Right lobe of liver (tissue), 6 donors: ENCODE measurements at regions of chr9 and their contacts with region 1.

Region 1: DNA sequence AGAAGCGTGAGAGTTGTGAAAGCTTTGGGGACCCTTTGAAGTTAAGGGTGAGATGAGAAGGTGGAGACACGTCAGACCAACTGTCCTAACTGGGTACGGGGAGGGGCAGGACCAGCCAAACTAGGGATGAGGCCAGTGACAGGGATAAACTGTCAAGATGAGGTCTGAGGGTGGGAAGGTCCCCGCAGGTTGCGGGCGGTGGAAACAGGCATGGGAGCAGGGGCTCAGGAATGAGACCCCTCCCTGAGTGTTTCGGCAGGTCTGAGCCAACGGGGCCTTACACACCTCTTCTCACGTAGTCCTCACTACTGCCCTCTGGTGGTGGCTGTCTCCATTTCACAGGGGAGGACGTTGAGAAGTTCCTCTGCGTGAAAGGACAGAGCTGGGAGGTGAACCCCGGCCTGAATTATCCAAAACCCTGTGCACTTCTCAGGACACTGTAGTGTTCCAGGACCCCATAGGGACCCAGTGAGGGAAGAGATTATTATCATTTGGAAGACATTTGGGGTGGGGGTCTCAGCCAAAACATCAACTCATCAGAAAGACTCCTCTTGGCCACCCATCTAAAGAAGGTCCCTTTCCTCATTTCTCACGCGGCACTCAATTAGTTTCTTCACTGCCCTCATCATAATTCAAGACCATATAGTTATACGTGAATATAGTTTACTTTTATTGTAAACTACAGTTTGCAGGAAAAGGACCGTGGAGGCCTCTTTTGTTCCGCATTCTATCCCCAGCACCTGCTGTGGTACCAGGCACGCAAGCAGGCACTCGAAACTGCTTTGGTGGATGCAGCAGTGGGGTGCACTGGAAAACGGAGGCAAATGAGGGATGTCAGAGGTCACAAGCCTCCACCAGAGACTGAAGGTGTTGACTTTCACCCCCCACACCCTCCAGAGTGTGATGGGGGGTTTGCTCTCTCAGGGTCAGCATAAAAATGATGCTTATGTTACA is 21.7 kb upstream of the NANS start:
- DNase-seq: peak; percentile 82 to 83 (median 83)
- ATAC-seq: peak; percentile 90 to 95 (median 94)
- H3K4me3 ChIP-seq: no peak overlapping the region
- H3K27ac ChIP-seq: no peak overlapping the region
- H3K4me1 ChIP-seq: no peaks in the 10 kb centered on the region
- H3K27me3 ChIP-seq: no peaks in the 10 kb centered on the region
- CTCF ChIP-seq: peak; percentile 66 to 87 (median 83)
- POLR2A ChIP-seq: no peak

Region 2: GRCh38 chr9:97921959-97922724 is 112.7 kb before region 1 on chr9 and contains the start of gene TRMO:
- intact Hi-C with region 1: loop called in 1 of 2 experiments (anchors 10 kb)
- DNase-seq: peak; percentile 98
- ATAC-seq: peak; percentile 90 to 94 (median 92)
- H3K4me3 ChIP-seq: peak within 1 kb of the TSS; percentile 56 to 61 (median 61)
- H3K27ac ChIP-seq: peak within 1 kb of the TSS; percentile 98 to 100 (median 98)
- H3K4me1 ChIP-seq: peaks cover 0 to 28% (median 3%) of the 10 kb centered on the region in 4 donors
- H3K27me3 ChIP-seq: peaks cover 0 to 2% of the 10 kb centered on the region in 2 donors
- CTCF ChIP-seq: peak; percentile 22 to 81 (median 67)
- POLR2A ChIP-seq: peak; percentile 97
- total RNA-seq, gene TRMO: 5.7 to 14.7 (median 8.3) TPM